IMR-90 (cell line): ENCODE measurements at regions of chr6 and their contacts with region 1.

Region 1: GRCh38 chr6:148044261-148044751 is 298.3 kb upstream of the SASH1 start:
- DNase-seq: peak; percentile 60
- ATAC-seq: peak; percentile 89
- H3K4me3 ChIP-seq: no peak overlapping the region
- H3K27ac ChIP-seq: peak overlapping the region; percentile 64; the same call in 1 of the 2 replicates
- H3K4me1 ChIP-seq: peaks cover 5% of the 10 kb centered on the region; the same call in 1 of the 2 replicates
- H3K27me3 ChIP-seq: no peaks in the 10 kb centered on the region
- CTCF ChIP-seq: no peak
- POLR2A ChIP-seq: no peak
- RAD21 ChIP-seq: no peak

Region 2: GRCh38 chr6:147839708-147840610 is 204.3 kb before region 1 on chr6:
- CTCF ChIA-PET with region 1: no interaction called
- POLR2A ChIA-PET with region 1: no interaction called
- dilution Hi-C with region 1: no loop called
- in situ Hi-C with region 1: no loop called
- intact Hi-C with region 1: loop called (anchors 5 kb)
- DNase-seq: no peak
- ATAC-seq: no peak; the same call in 1 of the 2 replicates
- H3K4me3 ChIP-seq: no peak overlapping the region
- H3K27ac ChIP-seq: no peak overlapping the region
- H3K4me1 ChIP-seq: no peaks in the 10 kb centered on the region
- H3K27me3 ChIP-seq: no peaks in the 10 kb centered on the region
- CTCF ChIP-seq: no peak
- POLR2A ChIP-seq: no peak
- RAD21 ChIP-seq: no peak

Region 3: GRCh38 chr6:147970975-147971374 is 73.3 kb before region 1 on chr6:
- CTCF ChIA-PET with region 1: no interaction called
- POLR2A ChIA-PET with region 1: no interaction called
- dilution Hi-C with region 1: no loop called
- in situ Hi-C with region 1: no loop called
- intact Hi-C with region 1: no loop called
- DNase-seq: peak; percentile 5
- ATAC-seq: no peak
- H3K4me3 ChIP-seq: no peak overlapping the region
- H3K27ac ChIP-seq: no peak overlapping the region
- H3K4me1 ChIP-seq: no peaks in the 10 kb centered on the region
- H3K27me3 ChIP-seq: no peaks in the 10 kb centered on the region; the same call in 1 of the 2 replicates
- CTCF ChIP-seq: peak; percentile 18; the same call in 1 of the 2 replicates
- POLR2A ChIP-seq: no peak
- RAD21 ChIP-seq: peak; percentile 44

Region 4: DNA sequence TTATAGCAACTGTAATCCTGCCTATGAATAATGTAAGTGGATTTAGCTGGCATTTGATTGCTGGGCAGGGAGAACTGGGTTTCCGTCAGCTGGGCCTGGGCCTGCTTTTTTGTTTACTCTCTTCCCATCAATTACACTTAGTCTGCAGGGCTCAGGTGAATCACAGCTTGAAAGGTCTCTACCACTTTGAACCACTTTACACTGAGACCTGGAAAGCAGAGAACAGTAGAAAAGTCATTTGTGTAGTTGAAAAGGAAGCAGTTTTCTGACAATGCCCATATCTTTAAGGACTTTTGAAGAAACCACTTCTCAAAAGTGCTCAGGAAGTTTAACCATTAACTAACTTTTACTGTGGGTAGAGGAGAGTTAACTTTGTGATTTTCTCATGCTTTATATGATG is 17.1 kb before region 1 on chr6:
- CTCF ChIA-PET with region 1: no interaction called
- POLR2A ChIA-PET with region 1: no interaction called
- dilution Hi-C with region 1: no loop called
- in situ Hi-C with region 1: no loop called
- intact Hi-C with region 1: no loop called
- DNase-seq: no peak
- ATAC-seq: no peak
- H3K4me3 ChIP-seq: no peak overlapping the region
- H3K27ac ChIP-seq: no peak overlapping the region
- H3K4me1 ChIP-seq: no peaks in the 10 kb centered on the region
- H3K27me3 ChIP-seq: no peaks in the 10 kb centered on the region
- CTCF ChIP-seq: no peak
- POLR2A ChIP-seq: no peak
- RAD21 ChIP-seq: no peak